ENCODE measurements at regions of chr15 and their contacts with region 1.

Region 1: DNA sequence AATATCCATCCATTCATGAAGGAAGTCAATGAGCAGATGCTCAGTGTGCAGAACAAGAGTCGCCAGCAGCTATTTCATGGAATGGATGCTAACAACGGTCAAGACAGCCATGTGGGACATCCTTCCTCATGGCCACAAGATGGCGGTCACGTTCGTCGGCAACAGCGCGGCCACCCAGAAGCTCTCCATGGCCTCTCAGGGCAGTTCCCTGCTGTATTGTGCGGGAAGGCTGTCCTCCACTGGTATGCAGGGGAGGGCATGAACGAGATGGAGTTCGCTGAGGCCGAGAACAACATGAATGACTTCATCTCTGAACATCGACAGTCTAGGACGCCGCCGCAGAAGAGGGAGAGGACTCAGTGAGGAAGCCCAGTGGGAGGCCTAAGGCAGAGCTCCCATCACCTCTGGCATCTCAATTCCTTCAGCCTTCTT is 208.3 kb downstream of the TJP1 start:
- DNase-seq: peak; percentile 62
- ATAC-seq: peak; percentile 64
- H3K4me3 Mint-ChIP-seq: no peak overlapping the region
- H3K27ac Mint-ChIP-seq: no peak overlapping the region
- H3K4me1 Mint-ChIP-seq: peaks cover 38% of the 10 kb centered on the region
- H3K27me3 Mint-ChIP-seq: peaks cover 6% of the 10 kb centered on the region
- CTCF ChIP-seq: peak; percentile 52

Region 2: GRCh38 chr15:29568838-29569532 is 45.0 kb before region 1 on chr15:
- CTCF ChIA-PET with region 1: interaction called, 24 read pairs
- POLR2A ChIA-PET with region 1: interaction called, 3 read pairs
- DNase-seq: peak; percentile 53
- ATAC-seq: peak; percentile 65
- H3K4me3 Mint-ChIP-seq: peak overlapping the region; percentile 75
- H3K27ac Mint-ChIP-seq: no peak overlapping the region
- H3K4me1 Mint-ChIP-seq: peaks cover 34% of the 10 kb centered on the region
- H3K27me3 Mint-ChIP-seq: peaks cover 37% of the 10 kb centered on the region
- CTCF ChIP-seq: no peak

Region 3: DNA sequence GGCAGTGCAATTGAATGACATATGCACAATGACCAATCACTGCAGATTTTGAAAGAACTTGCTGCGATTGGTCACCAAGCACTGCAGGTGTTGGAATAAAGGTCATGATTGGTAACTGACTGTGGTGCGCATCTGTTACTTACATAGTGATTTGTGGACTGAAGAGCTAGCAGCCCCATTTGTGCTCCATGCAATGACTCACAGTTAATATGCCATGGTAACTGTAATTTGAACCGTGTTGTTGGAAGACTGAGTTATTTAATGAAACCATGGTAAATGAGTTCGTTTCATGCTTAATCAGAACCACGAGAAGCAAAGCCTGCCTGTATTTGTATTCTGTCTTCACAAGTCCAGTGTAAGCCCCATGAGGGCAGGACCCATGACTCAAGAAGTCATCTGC is 12.2 kb before region 1 on chr15:
- CTCF ChIA-PET with region 1: interaction called, 10 read pairs
- POLR2A ChIA-PET with region 1: interaction called, 4 read pairs
- DNase-seq: no peak
- ATAC-seq: no peak
- H3K4me3 Mint-ChIP-seq: no peak overlapping the region
- H3K27ac Mint-ChIP-seq: no peak overlapping the region
- H3K4me1 Mint-ChIP-seq: no peaks in the 10 kb centered on the region
- H3K27me3 Mint-ChIP-seq: no peaks in the 10 kb centered on the region
- CTCF ChIP-seq: no peak

Region 4: DNA sequence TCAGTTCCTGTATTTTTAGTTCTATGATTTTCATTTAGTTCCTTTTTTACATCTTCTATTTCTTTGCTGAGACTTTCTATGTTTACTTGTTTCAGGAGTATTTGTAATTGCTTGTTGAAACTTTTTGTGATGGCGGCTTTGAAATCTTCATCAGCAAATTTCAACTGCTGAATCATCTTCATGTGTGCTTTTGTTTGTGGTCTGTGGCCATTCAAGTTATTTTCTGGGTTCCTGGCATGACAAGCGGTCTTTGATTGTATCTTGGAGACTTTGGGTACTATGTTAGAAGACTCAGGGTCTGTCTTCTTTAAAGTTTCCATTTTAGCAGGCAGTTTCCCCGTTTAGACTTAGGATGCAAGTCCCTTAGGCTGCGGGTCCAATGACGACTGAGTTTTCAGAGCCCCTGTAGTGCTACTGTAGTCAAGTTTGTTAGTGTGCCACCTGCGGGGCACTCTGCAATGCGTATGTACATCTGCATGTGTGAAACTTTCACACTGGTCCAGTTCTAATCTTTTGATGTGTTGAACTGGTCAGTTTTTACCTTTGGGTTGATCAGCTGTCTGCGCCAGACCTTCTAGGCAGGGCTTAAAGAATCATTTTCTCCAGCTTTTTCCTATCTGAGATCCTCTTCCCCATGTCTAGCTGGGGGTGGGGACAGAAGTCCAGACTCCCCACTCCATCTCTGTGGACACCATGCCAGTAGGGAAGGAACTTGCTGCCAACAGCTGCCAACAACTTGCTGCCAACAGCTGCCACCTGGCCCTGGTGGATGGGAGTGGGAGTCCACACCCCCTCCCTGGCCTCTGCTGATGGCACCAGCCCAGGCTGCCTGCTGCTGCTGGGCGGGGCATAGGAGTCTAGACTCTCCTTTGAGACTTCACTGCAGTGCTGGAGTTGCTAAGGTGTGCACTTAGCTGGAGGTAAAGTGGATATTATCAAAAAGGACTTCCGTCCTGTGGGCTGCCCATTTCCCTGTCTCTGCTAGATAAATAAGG is 17.4 kb after region 1 on chr15:
- CTCF ChIA-PET with region 1: interaction called, 11 read pairs
- POLR2A ChIA-PET with region 1: no interaction called
- DNase-seq: no peak
- ATAC-seq: peak; percentile 72
- H3K4me3 Mint-ChIP-seq: no peak overlapping the region
- H3K27ac Mint-ChIP-seq: no peak overlapping the region
- H3K4me1 Mint-ChIP-seq: peaks cover 16% of the 10 kb centered on the region
- H3K27me3 Mint-ChIP-seq: peaks cover 2% of the 10 kb centered on the region; the same call in 1 of the 2 replicates
- CTCF ChIP-seq: no peak

Region 5: DNA sequence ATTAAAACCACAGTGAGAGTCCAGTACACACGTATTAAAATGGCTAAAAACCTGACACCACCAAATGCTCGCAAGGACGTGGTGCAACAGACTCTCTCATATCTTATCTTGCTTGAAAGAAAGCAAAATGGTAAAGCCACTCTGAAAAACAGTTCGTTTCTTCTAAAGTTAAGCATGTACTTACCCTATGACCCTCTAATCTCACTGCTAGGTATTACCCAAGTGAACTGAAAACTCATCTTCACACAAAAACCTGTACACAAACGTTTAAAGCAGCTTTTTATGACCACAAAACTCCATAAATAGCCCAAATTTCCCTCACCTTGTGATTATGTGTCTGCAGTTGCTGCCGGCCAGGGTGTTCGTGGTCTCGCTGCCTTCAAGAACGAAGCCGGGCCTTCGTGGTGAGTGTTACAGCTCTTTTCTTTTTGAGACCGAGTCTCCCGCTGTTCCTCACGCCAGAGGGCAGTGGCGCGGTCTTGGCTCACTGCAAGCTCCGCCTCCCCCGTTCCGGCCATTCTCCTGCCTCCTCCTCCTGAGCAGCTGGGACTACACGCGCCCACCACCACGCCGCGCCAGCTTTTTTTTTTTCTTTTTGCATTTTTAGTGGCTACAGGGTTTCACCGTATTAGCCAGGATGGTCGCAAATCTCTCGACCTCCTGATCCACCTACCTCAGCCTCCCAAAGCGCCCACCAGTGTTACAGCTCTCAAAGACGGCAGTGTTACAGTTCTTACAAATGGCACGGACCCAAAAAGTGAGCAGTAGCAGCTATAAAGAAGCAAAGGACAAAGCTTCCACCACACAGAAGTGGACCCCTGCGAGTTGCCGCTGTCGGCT is 42.9 kb after region 1 on chr15:
- CTCF ChIA-PET with region 1: interaction called, 16 read pairs
- POLR2A ChIA-PET with region 1: no interaction called
- DNase-seq: peak; percentile 83
- ATAC-seq: peak; percentile 99
- H3K4me3 Mint-ChIP-seq: peak overlapping the region; percentile 42
- H3K27ac Mint-ChIP-seq: peak overlapping the region; percentile 54; the same call in 1 of the 2 replicates
- H3K4me1 Mint-ChIP-seq: peaks cover 9% of the 10 kb centered on the region
- H3K27me3 Mint-ChIP-seq: peaks cover 11% of the 10 kb centered on the region
- CTCF ChIP-seq: no peak

Region 6: GRCh38 chr15:29692527-29692926 is 78.6 kb after region 1 on chr15:
- CTCF ChIA-PET with region 1: no interaction called
- POLR2A ChIA-PET with region 1: no interaction called
- DNase-seq: no peak
- ATAC-seq: no peak; the same call in 1 of the 2 replicates
- H3K4me3 Mint-ChIP-seq: no peak overlapping the region
- H3K27ac Mint-ChIP-seq: no peak overlapping the region
- H3K4me1 Mint-ChIP-seq: peaks cover 7% of the 10 kb centered on the region
- H3K27me3 Mint-ChIP-seq: no peaks in the 10 kb centered on the region
- CTCF ChIP-seq: no peak

Region 7: DNA sequence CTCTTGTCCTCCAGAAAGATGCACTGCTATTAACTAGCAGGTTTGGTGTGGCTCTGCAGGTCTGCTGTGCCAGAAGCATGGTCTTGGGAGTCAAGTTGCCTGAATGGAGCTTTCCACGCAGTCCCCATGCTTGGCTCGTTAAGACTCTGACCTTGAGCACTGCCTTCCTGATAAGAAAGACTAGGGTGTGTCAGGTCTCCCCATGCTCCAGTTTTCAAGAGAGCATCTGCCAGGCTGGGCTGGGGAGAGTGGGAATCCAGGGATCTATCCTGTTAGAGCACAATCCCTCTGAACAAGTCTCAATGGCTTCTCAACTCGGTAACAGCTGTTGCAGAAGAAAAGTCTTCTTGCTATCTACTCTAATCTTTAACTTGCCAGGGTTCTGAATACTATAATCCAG is 110.1 kb after region 1 on chr15:
- CTCF ChIA-PET with region 1: no interaction called
- POLR2A ChIA-PET with region 1: no interaction called
- DNase-seq: no peak
- ATAC-seq: no peak
- H3K4me3 Mint-ChIP-seq: no peak overlapping the region
- H3K27ac Mint-ChIP-seq: no peak overlapping the region
- H3K4me1 Mint-ChIP-seq: no peaks in the 10 kb centered on the region
- H3K27me3 Mint-ChIP-seq: no peaks in the 10 kb centered on the region; the same call in 1 of the 2 replicates
- CTCF ChIP-seq: no peak